ENCODE measurements at regions of chr6 and their contacts with region 1.

Region 1: GRCh38 chr6:30730601-30731435 is 10.7 kb downstream of the TUBB start:
- DNase-seq: peak; percentile 65 to 74
- H3K4me3 ChIP-seq: no peak overlapping the region
- H3K4me3 Mint-ChIP-seq: no peak overlapping the region
- H3K27ac Mint-ChIP-seq: no peak overlapping the region
- H3K4me1 ChIP-seq: no peaks in the 10 kb centered on the region
- H3K4me1 Mint-ChIP-seq: no peaks in the 10 kb centered on the region
- H3K27me3 ChIP-seq: no peaks in the 10 kb centered on the region
- H3K27me3 Mint-ChIP-seq: no peaks in the 10 kb centered on the region
- CTCF ChIP-seq: peak; percentile 61 to 62

Region 2: GRCh38 chr6:30259140-30260035 is 471.4 kb before region 1 on chr6:
- CTCF ChIA-PET with region 1: no interaction called
- POLR2A ChIA-PET with region 1: no interaction called
- intact Hi-C with region 1: no loop called
- DNase-seq: peak; percentile 78 to 82
- H3K4me3 ChIP-seq: peak overlapping the region; percentile 70
- H3K4me3 Mint-ChIP-seq: peak overlapping the region; percentile 78
- H3K27ac Mint-ChIP-seq: peak overlapping the region; percentile 80
- H3K4me1 ChIP-seq: peaks cover 15% of the 10 kb centered on the region
- H3K4me1 Mint-ChIP-seq: peaks cover 4% of the 10 kb centered on the region
- H3K27me3 ChIP-seq: no peaks in the 10 kb centered on the region
- H3K27me3 Mint-ChIP-seq: peaks cover 9% of the 10 kb centered on the region
- CTCF ChIP-seq: peak in 1 of 2 experiments; percentile 26

Region 3: GRCh38 chr6:30678964-30679726 is 51.7 kb before region 1 on chr6:
- CTCF ChIA-PET with region 1: interaction called, 21 read pairs
- POLR2A ChIA-PET with region 1: no interaction called
- intact Hi-C with region 1: no loop called
- DNase-seq: peak; percentile 68 to 86
- H3K4me3 ChIP-seq: no peak overlapping the region
- H3K4me3 Mint-ChIP-seq: no peak overlapping the region
- H3K27ac Mint-ChIP-seq: no peak overlapping the region
- H3K4me1 ChIP-seq: 0 out of 2 replicates have a peak, but pooled peaks cover 4% of the 10 kb centered on the region
- H3K4me1 Mint-ChIP-seq: peaks cover 4% of the 10 kb centered on the region
- H3K27me3 ChIP-seq: no peaks in the 10 kb centered on the region
- H3K27me3 Mint-ChIP-seq: no peaks in the 10 kb centered on the region
- CTCF ChIP-seq: peak; percentile 81 to 95

Region 4: DNA sequence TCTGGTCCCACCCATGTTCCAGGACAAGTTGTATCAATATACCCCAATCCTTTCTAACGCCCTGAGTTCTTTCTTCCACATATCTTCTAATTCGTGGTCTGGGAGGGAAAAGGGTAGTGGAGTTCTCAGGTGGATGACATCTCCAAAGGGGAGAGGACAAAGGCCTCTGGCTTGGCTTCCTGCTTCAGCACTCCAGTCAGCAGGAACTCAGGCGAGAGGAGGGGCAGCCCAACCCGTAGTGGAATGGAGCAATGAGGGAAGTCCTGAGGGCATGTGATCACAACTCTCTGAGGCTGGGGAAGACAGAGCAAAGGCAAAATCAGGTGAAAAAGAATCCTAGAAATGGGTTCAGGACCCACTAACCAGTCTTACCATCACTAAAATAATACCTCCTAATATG is 30.5 kb before region 1 on chr6:
- CTCF ChIA-PET with region 1: no interaction called
- POLR2A ChIA-PET with region 1: no interaction called
- intact Hi-C with region 1: no loop called
- DNase-seq: peak; percentile 29 to 47
- H3K4me3 ChIP-seq: no peak overlapping the region
- H3K4me3 Mint-ChIP-seq: no peak overlapping the region
- H3K27ac Mint-ChIP-seq: no peak overlapping the region
- H3K4me1 ChIP-seq: peaks cover 7% of the 10 kb centered on the region
- H3K4me1 Mint-ChIP-seq: peaks cover under 1% of the 10 kb centered on the region
- H3K27me3 ChIP-seq: no peaks in the 10 kb centered on the region
- H3K27me3 Mint-ChIP-seq: no peaks in the 10 kb centered on the region
- CTCF ChIP-seq: no peak